ENCODE measurements at regions of chr9 and their contacts with region 1.

Region 1: GRCh38 chr9:109914280-109915027 is 134.5 kb downstream of the PALM2AKAP2 start:
- DNase-seq: no peak
- ATAC-seq: no peak
- H3K4me3 ChIP-seq: no peak overlapping the region
- H3K27ac ChIP-seq: no peak overlapping the region
- H3K4me1 ChIP-seq: peaks cover 15% of the 10 kb centered on the region
- H3K27me3 ChIP-seq: no peaks in the 10 kb centered on the region

Region 2: DNA sequence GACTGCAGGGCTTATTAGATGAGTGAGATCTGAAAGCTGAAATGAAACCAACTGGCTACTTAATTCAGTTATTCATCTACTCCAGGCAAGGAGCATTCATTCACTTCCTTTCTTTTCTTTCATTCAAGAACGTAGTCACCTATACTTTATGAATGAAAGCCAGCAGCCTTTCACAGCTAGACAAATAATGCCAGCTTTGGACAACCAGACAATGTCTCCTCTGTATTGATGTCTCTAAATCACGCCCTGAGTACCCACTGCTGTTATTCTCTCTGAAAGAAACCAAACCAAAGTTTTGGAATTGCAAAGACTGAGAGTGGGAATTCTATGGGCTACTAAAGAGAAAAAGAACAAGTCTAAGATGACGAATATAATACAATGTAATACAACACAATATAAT is 295.1 kb before region 1 on chr9:
- intact Hi-C with region 1: no loop called
- DNase-seq: no peak
- ATAC-seq: no peak
- H3K4me3 ChIP-seq: no peak overlapping the region
- H3K27ac ChIP-seq: no peak overlapping the region
- H3K4me1 ChIP-seq: no peaks in the 10 kb centered on the region
- H3K27me3 ChIP-seq: no peaks in the 10 kb centered on the region

Region 3: DNA sequence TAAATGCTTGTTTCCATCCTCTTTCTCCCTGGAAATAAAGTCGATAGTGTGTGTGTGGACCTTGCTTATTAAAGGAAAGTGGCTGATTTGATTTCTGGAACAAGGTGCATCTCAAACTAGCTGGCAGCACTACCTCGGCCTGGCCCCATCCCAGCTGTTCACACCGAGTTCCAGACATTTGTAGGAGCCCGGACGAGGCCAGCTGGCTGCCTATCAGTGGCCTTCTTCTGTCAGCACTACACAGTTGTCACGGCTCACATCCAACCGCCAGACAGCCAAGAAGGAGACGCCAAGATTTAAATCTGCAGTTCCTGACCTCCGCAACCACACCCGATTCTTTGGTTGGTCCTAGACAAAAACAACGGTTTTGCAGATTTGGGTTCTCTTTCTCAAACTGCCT is 70.8 kb before region 1 on chr9:
- intact Hi-C with region 1: no loop called
- DNase-seq: peak; percentile 79 to 94 (median 92)
- ATAC-seq: peak; percentile 94
- H3K4me3 ChIP-seq: no peak overlapping the region
- H3K27ac ChIP-seq: no peak overlapping the region
- H3K4me1 ChIP-seq: no peaks in the 10 kb centered on the region
- H3K27me3 ChIP-seq: no peaks in the 10 kb centered on the region

Region 4: GRCh38 chr9:110048403-110048975 is 134.0 kb after region 1 on chr9:
- intact Hi-C with region 1: loop called in 3 of 4 experiments (anchors 5 to 10 kb)
- DNase-seq: peak; percentile 86 to 94 (median 92)
- ATAC-seq: peak; percentile 96 to 97
- H3K4me3 ChIP-seq: peak overlapping the region; percentile 92
- H3K27ac ChIP-seq: peak overlapping the region; percentile 77
- H3K4me1 ChIP-seq: peaks cover 8% of the 10 kb centered on the region
- H3K27me3 ChIP-seq: no peaks in the 10 kb centered on the region

Region 5: DNA sequence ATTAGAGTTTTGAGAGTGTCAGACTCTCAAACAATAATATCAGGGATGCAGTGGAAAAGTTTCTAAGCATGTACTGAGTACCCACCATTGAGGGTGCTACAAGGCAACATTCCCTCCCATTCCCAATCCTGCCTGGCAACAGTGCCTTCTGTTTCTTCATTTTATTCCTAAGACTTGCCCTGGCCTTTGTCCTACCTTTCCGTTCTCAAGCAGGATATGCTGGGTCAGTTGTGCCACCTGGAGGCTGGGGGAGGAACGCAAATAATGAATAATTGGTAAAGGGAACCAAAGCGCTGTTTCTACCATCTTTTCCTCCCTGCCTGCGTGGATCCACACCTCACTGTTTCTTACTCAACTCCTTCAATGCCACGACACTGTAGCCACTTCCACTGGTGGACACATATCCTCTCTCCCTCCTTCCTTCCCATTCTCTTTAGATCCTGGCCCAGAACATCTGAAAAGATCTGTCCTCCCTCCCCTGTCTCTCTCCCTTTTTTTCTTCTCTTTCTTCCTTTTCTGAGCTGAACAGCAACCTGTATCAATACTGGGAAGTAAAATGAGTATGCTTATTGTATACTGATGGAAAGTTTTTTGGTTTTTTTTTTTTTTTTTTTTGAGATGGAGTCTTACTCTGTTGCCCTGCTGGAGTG is 144.0 kb after region 1 on chr9:
- intact Hi-C with region 1: loop called in 3 of 4 experiments (anchors 5 to 10 kb)
- DNase-seq: peak in 2 of 3 donors; percentile 59 to 65
- ATAC-seq: peak; percentile 67 to 72
- H3K4me3 ChIP-seq: no peak overlapping the region
- H3K27ac ChIP-seq: no peak overlapping the region
- H3K4me1 ChIP-seq: no peaks in the 10 kb centered on the region
- H3K27me3 ChIP-seq: no peaks in the 10 kb centered on the region